HepG2 (cell line): ENCODE measurements at regions of chr13 and their contacts with region 1.

Region 1: GRCh38 chr13:67230404-67231288 is 510 bp upstream of the PCDH9 start:
- DNase-seq: peak; percentile 80
- ATAC-seq: peak; percentile 95
- H3K4me3 ChIP-seq: peak overlapping the region; percentile 68 to 82 (median 70)
- H3K27ac ChIP-seq: peak overlapping the region; percentile 24
- H3K4me1 ChIP-seq: peaks cover 16% of the 10 kb centered on the region
- H3K27me3 ChIP-seq: peaks cover 0 to 35% of the 10 kb centered on the region in 2 experiments; a peak in 4 of 5 replicates
- CTCF ChIP-seq: no peak
- EP300 ChIP-seq: peak in 1 of 2 experiments; percentile 21; a peak in 1 of 4 replicates
- POLR2A ChIP-seq: peak in 1 of 2 experiments; percentile 64; a peak in 2 of 4 replicates
- RAD21 ChIP-seq: no peak

Region 2: DNA sequence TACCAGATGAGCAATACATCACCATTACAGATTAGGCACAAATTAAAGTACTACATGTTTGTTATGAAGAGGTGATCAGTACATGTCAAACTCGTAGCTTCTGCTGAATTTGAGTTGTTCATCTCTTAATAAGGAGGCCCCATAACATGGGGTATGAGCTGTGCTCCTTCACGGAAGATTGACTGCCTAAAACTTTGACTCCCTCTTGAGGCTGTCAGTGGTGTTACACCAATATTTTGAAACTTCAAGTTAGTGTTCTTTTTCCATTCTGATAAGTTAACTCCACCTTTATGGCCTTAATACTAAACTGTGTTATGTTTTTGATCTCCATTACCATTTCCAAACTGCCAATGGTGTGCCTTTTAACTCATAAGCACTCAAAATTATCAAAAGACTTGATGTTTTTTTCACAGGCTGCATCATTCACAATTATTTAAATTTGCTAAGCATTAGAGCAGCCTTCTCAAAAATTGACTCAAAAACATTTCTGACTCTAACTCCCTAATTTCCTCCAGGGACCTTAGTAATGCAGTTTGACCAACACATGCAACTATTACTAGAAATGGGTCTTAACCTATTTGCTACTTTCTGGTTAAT is 1592.0 kb before region 1 on chr13:
- CTCF ChIA-PET with region 1: no interaction called
- POLR2A ChIA-PET with region 1: no interaction called
- in situ Hi-C with region 1: loop called (anchors 25 kb)
- intact Hi-C with region 1: no loop called
- DNase-seq: peak; percentile 16
- ATAC-seq: peak; percentile 67
- H3K4me3 ChIP-seq: no peak overlapping the region
- H3K27ac ChIP-seq: no peak overlapping the region
- H3K4me1 ChIP-seq: no peaks in the 10 kb centered on the region
- H3K27me3 ChIP-seq: no peaks in the 10 kb centered on the region
- CTCF ChIP-seq: peak; percentile 66
- EP300 ChIP-seq: no peak
- POLR2A ChIP-seq: no peak
- RAD21 ChIP-seq: no peak

Region 3: GRCh38 chr13:65913173-65913572 is 1317.5 kb before region 1 on chr13:
- CTCF ChIA-PET with region 1: no interaction called
- POLR2A ChIA-PET with region 1: no interaction called
- in situ Hi-C with region 1: loop called (anchors 25 kb)
- intact Hi-C with region 1: no loop called
- DNase-seq: no peak
- ATAC-seq: no peak
- H3K4me3 ChIP-seq: no peak overlapping the region
- H3K27ac ChIP-seq: no peak overlapping the region
- H3K4me1 ChIP-seq: no peaks in the 10 kb centered on the region
- H3K27me3 ChIP-seq: no peaks in the 10 kb centered on the region; a peak in 1 of 5 replicates
- CTCF ChIP-seq: no peak
- EP300 ChIP-seq: no peak
- POLR2A ChIP-seq: no peak
- RAD21 ChIP-seq: no peak

Region 4: GRCh38 chr13:67283637-67284036 is 53.0 kb after region 1 on chr13:
- CTCF ChIA-PET with region 1: no interaction called
- POLR2A ChIA-PET with region 1: no interaction called
- in situ Hi-C with region 1: no loop called
- intact Hi-C with region 1: loop called (anchors 5 kb)
- DNase-seq: peak; percentile 88
- ATAC-seq: peak; percentile 99
- H3K4me3 ChIP-seq: no peak overlapping the region
- H3K27ac ChIP-seq: peak overlapping the region; percentile 50
- H3K4me1 ChIP-seq: peaks cover 17% of the 10 kb centered on the region
- H3K27me3 ChIP-seq: no peaks in the 10 kb centered on the region
- CTCF ChIP-seq: no peak
- EP300 ChIP-seq: peak; percentile 56 to 79; a peak in 2 of 4 replicates
- POLR2A ChIP-seq: no peak
- RAD21 ChIP-seq: no peak